PC-9 (cell line): ENCODE measurements at regions of chr9 and their contacts with region 1.

Region 1: GRCh38 chr9:106899461-106899860 is 36.5 kb downstream of the ZNF462 start:
- DNase-seq: no peak
- H3K4me3 ChIP-seq: no peak overlapping the region
- H3K27ac ChIP-seq: no peak overlapping the region
- H3K4me1 ChIP-seq: peaks cover 17% of the 10 kb centered on the region
- H3K27me3 ChIP-seq: no peaks in the 10 kb centered on the region
- CTCF ChIP-seq: no peak

Region 2: GRCh38 chr9:106981396-106982287 is 82.2 kb after region 1 on chr9:
- CTCF ChIA-PET with region 1: no interaction called
- POLR2A ChIA-PET with region 1: interaction called, 13 read pairs
- intact Hi-C with region 1: no loop called
- DNase-seq: no peak
- H3K4me3 ChIP-seq: no peak overlapping the region
- H3K27ac ChIP-seq: no peak overlapping the region
- H3K4me1 ChIP-seq: no peaks in the 10 kb centered on the region
- H3K27me3 ChIP-seq: no peaks in the 10 kb centered on the region
- CTCF ChIP-seq: no peak

Region 3: DNA sequence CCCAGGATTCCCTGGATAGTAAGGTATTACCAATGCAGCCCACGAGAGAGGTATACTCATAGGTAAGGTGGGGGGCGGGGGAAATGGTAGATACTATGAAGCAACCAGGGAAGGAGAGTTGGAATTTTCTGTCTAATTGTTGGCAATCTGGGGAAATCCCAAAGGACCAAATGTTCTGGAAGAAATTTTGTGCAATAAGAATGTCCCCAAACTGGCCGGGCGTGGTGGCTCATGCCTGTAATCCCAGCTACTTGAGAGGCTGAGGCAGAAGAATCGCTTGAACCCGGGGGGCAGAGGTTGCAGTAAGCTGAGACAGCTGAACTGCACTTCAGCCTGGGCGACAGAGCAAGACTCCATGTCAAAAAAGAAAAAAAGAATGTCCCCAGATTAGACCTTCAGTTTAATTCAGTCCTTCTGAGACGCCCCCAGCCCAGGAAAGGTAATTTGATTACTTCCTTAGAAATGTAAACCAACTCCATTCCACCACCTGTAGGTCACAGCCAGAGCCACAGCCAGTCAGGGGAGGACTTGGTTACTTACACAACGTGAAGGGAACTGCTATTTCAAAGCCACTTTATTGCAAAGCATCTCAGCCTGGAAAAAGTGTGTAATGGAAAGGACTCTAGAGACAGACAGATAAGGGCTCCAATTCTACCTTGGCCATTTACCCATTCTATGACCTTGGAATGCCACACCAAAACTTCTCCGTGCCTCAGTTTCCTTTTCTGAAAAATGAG is 640.1 kb after region 1 on chr9:
- CTCF ChIA-PET with region 1: no interaction called
- POLR2A ChIA-PET with region 1: no interaction called
- intact Hi-C with region 1: no loop called
- DNase-seq: peak in 1 of 2 experiments; percentile 42
- H3K4me3 ChIP-seq: no peak overlapping the region
- H3K27ac ChIP-seq: no peak overlapping the region
- H3K4me1 ChIP-seq: peaks cover 8% of the 10 kb centered on the region; the same call in 1 of the 2 replicates
- H3K27me3 ChIP-seq: no peaks in the 10 kb centered on the region
- CTCF ChIP-seq: no peak; the same call in 1 of the 2 replicates